ENCODE measurements at regions of chr2 and their contacts with region 1.

Region 1: GRCh38 chr2:144914622-144915318 is 394.9 kb upstream of the ZEB2 start:
- DNase-seq: no peak
- ATAC-seq: no peak
- H3K4me3 ChIP-seq: no peak overlapping the region
- H3K4me3 Mint-ChIP-seq: no peak overlapping the region
- H3K27ac ChIP-seq: no peak overlapping the region
- H3K27ac Mint-ChIP-seq: no peak overlapping the region
- H3K4me1 ChIP-seq: no peaks in the 10 kb centered on the region
- H3K4me1 Mint-ChIP-seq: peaks cover 0 to 5% (median 2%) of the 10 kb centered on the region in 3 donors
- H3K27me3 ChIP-seq: no peaks in the 10 kb centered on the region
- H3K27me3 Mint-ChIP-seq: no peaks in the 10 kb centered on the region

Region 2: DNA sequence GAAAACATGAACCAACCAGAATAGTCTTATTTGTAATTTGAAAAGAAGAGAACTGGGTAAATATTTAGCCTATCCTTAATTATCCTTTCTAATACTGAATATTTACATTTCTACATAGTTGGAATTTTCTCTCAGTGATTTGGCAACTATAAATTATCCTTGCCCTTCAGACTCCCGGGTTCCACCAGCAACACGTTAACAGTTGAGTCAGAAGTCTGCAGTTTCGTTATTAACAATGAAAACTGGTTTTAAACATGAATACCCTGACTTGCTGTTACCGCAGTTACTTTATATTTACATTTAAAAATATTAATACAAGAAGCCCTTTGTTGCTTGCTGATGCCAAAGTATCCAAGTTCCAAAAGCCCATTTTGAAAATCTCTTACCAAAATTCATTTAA is 1112.5 kb before region 1 on chr2:
- CTCF ChIA-PET with region 1: no interaction called
- POLR2A ChIA-PET with region 1: interaction called in 1 of 2 experiments, 10 read pairs
- DNase-seq: no peak
- ATAC-seq: no peak
- H3K4me3 ChIP-seq: no peak overlapping the region
- H3K4me3 Mint-ChIP-seq: no peak overlapping the region
- H3K27ac ChIP-seq: no peak overlapping the region
- H3K27ac Mint-ChIP-seq: no peak overlapping the region
- H3K4me1 ChIP-seq: no peaks in the 10 kb centered on the region
- H3K4me1 Mint-ChIP-seq: peaks cover 0 to 9% (median 9%) of the 10 kb centered on the region in 3 donors
- H3K27me3 ChIP-seq: no peaks in the 10 kb centered on the region
- H3K27me3 Mint-ChIP-seq: peaks cover 0 to 11% of the 10 kb centered on the region in 2 donors

Measured in T-cell (primary cell).